ENCODE measurements at regions of chr9 and their contacts with region 1.

Region 1: GRCh38 chr9:107292821-107293542 is 9.9 kb downstream of the RAD23B start:
- DNase-seq: no peak
- ATAC-seq: peak; percentile 6; the same call in 1 of the 3 replicates
- H3K4me3 ChIP-seq: no peak overlapping the region
- H3K27ac ChIP-seq: no peak overlapping the region
- H3K4me1 ChIP-seq: 0 out of 2 replicates have a peak, but pooled peaks cover 4% of the 10 kb centered on the region
- H3K27me3 ChIP-seq: no peaks in the 10 kb centered on the region
- CTCF ChIP-seq: no peak
- EP300 ChIP-seq: no peak
- POLR2A ChIP-seq: no peak
- RAD21 ChIP-seq: no peak

Region 2: GRCh38 chr9:107309271-107309670 is 16.3 kb after region 1 on chr9:
- CTCF ChIA-PET with region 1: interaction called, 3 read pairs
- POLR2A ChIA-PET with region 1: interaction called, 3 read pairs
- RAD21 ChIA-PET with region 1: interaction called, 4 read pairs
- SMC1A ChIA-PET with region 1: interaction called, 11 read pairs
- in situ Hi-C with region 1: no loop called
- intact Hi-C with region 1: no loop called
- DNase-seq: peak; percentile 25
- ATAC-seq: peak; percentile 77
- H3K4me3 ChIP-seq: no peak overlapping the region
- H3K27ac ChIP-seq: no peak overlapping the region
- H3K4me1 ChIP-seq: 0 out of 2 replicates have a peak, but pooled peaks cover 4% of the 10 kb centered on the region
- H3K27me3 ChIP-seq: no peaks in the 10 kb centered on the region
- CTCF ChIP-seq: no peak
- EP300 ChIP-seq: peak in 1 of 2 experiments; percentile 63; a peak in 1 of 4 replicates
- POLR2A ChIP-seq: no peak
- RAD21 ChIP-seq: no peak

Region 3: DNA sequence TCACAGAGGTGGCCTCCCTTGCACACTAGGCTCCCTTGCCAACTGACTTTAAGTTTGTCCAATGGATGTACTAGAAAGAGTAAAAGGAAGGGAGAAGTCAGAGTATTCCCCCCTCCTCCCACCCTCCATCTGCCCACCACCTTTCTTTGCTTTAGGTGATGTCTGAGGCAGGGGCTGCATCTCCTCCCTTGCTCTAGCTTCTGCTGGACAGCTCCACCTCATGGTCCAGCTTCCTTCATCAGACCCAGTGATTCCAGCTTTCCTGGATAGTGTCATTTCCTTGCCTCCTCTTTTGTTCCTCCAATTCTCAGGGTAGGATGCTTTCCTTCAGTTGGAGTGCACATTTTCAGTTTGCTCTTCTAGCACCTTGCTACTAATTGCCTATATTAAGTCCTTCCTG is 57.4 kb after region 1 on chr9:
- CTCF ChIA-PET with region 1: no interaction called
- POLR2A ChIA-PET with region 1: no interaction called
- RAD21 ChIA-PET with region 1: no interaction called
- SMC1A ChIA-PET with region 1: no interaction called
- in situ Hi-C with region 1: no loop called
- intact Hi-C with region 1: no loop called
- DNase-seq: no peak
- ATAC-seq: no peak
- H3K4me3 ChIP-seq: no peak overlapping the region
- H3K27ac ChIP-seq: no peak overlapping the region
- H3K4me1 ChIP-seq: no peaks in the 10 kb centered on the region
- H3K27me3 ChIP-seq: no peaks in the 10 kb centered on the region; a peak in 1 of 4 replicates
- CTCF ChIP-seq: no peak
- EP300 ChIP-seq: no peak
- POLR2A ChIP-seq: no peak
- RAD21 ChIP-seq: no peak

Measured in GM12878 (cell line).